Naive thymus-derived CD4-positive, alpha-beta T cell (primary cell): ENCODE measurements at regions of chr6 and their contacts with region 1.

Region 1: DNA sequence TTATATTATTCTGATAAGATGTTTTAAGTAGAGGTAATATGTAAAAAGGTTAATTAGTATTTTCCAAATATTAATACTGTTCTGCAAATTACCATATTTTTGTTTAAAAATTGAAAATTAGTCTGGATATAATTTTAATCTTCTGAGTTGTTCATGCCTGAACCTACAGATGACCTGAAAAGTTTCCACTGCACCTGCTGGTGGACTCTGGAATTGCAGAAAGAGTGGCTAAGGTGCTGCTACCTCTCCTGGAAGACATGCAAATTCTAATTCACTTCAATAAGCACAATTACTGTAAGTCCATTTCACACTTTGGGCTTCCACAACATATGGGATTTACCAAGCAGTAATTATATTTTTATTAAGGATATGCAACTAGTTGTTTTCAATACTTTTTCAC is 77.7 kb upstream of the OLIG3 start:
- DNase-seq: peak; percentile 16 to 59 (median 38)
- ATAC-seq: peak; percentile 70
- H3K4me3 ChIP-seq: no peak overlapping the region
- H3K4me3 Mint-ChIP-seq: no peak overlapping the region
- H3K27ac ChIP-seq: no peak overlapping the region
- H3K27ac Mint-ChIP-seq: no peak overlapping the region
- H3K4me1 ChIP-seq: no peaks in the 10 kb centered on the region
- H3K4me1 Mint-ChIP-seq: peaks cover 0 to 10% (median 5%) of the 10 kb centered on the region in 7 donors
- H3K27me3 ChIP-seq: no peaks in the 10 kb centered on the region
- H3K27me3 Mint-ChIP-seq: peaks cover 0 to 65% (median 12%) of the 10 kb centered on the region in 5 donors

Region 2: DNA sequence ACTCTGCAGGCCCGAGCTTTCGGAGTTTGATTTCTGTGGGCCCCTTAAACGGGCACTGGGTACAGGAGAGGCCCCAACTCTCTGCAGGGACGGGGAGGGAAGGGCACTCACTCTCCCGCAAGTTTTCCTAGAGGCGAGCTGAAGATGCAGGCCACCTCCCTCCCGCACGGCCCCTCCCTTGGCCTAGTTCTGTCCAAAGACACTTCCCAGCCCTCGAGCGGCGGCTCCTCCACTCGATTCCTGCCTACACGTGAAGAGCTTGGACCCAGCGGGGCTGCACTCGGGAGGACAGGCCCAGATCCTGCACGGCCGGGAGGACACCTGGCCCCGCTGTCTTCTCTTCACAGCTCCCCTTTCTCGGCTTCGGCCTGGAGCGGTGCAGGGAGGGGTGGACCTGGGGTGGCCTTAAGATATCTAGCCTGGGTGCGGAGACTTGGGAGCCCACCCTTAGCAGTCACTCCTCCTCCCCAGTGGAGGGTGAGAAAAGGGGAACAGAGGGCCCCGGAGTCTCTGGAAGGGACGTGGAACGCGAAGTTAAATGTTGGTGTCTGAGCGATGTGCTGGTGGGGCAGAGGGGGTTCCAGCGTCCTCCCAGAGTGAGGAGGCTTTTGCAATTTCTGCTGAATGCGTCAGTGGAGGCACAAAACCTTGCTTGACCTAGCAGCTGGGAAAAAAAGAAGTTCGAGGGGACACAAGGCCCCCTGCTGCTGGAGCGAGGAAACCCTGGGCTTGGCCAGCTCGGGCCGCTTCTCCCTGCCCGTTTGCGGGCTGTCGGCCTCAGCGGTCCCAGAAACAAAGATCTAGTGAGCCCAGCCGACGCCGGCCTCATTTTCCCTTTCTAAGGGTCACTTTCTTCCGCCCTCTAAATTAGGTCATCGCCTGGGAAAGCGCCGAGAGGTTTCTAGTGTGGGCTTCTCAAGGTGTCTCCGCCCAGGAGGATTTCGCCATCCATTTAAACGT is 82.5 kb before region 1 on chr6:
- CTCF ChIA-PET with region 1: no interaction called
- POLR2A ChIA-PET with region 1: no interaction called
- intact Hi-C with region 1: loop called in 1 of 2 experiments (anchors 2 kb)
- DNase-seq: no peak
- ATAC-seq: no peak
- H3K4me3 ChIP-seq: peak overlapping the region; percentile 46
- H3K4me3 Mint-ChIP-seq: peak overlapping the region; percentile 37 to 82 (median 64)
- H3K27ac ChIP-seq: no peak overlapping the region
- H3K27ac Mint-ChIP-seq: peak overlapping the region in 1 of 9 donors; percentile 9
- H3K4me1 ChIP-seq: peaks cover 21 to 39% of the 10 kb centered on the region in 2 donors
- H3K4me1 Mint-ChIP-seq: peaks cover 5 to 57% (median 33%) of the 10 kb centered on the region in 7 donors
- H3K27me3 ChIP-seq: peaks cover 57 to 60% of the 10 kb centered on the region in 2 donors
- H3K27me3 Mint-ChIP-seq: peaks cover 82 to 92% (median 88%) of the 10 kb centered on the region in 5 donors

Region 3: DNA sequence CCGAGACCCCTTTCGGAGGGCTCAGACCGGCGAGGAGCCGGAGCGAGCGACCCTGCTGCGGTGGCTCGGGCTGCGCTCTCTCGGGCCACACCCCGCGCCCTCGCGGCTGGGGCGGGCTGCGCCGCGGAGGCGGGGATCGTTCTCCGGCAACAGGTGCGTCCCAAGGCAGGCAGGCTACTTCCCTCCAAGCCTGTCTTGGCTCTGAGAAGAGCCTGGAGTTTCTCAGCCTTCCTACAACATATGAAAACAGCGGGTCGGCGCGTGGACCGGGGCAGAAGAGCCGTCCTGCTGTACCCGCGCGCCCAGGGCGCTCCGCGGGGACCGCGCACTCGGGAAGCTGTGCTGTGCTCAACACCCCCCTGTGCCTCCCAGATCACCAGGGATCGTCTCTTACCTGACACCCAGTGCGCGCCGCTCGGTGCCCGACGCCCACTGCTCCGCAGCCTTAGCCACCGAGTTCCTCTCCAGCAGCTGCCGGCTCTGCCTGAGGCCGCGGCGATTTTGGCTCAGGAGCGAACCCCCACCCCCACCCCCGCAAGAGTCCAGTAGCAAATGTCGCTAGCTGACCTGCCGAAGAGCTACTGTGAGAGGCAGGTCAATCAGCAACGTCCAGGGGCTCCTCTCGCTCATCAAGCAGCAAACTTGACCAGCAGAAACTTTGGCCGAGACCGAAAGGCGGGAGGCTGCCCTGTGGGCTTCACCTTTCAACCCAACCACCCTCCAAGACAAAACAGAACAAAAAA is 74.0 kb before region 1 on chr6:
- CTCF ChIA-PET with region 1: interaction called, 3 read pairs
- POLR2A ChIA-PET with region 1: interaction called, 3 read pairs
- intact Hi-C with region 1: loop called in 1 of 2 experiments (anchors 2 kb)
- DNase-seq: peak in 4 of 9 donors; percentile 17 to 32 (median 28)
- ATAC-seq: peak; percentile 52
- H3K4me3 ChIP-seq: peak overlapping the region; percentile 34
- H3K4me3 Mint-ChIP-seq: peak overlapping the region; percentile 28 to 81 (median 56)
- H3K27ac ChIP-seq: no peak overlapping the region
- H3K27ac Mint-ChIP-seq: peak overlapping the region in 1 of 9 donors; percentile 13
- H3K4me1 ChIP-seq: peaks cover 35 to 36% of the 10 kb centered on the region in 2 donors
- H3K4me1 Mint-ChIP-seq: peaks cover 22 to 52% (median 39%) of the 10 kb centered on the region in 7 donors
- H3K27me3 ChIP-seq: peaks cover 47 to 55% of the 10 kb centered on the region in 2 donors
- H3K27me3 Mint-ChIP-seq: peaks cover 45 to 91% (median 76%) of the 10 kb centered on the region in 5 donors

Region 4: GRCh38 chr6:137522198-137522798 is 49.6 kb before region 1 on chr6:
- CTCF ChIA-PET with region 1: no interaction called
- POLR2A ChIA-PET with region 1: no interaction called
- intact Hi-C with region 1: loop called in 1 of 2 experiments (anchors 5 kb)
- DNase-seq: no peak
- ATAC-seq: no peak
- H3K4me3 ChIP-seq: no peak overlapping the region
- H3K4me3 Mint-ChIP-seq: no peak overlapping the region
- H3K27ac ChIP-seq: no peak overlapping the region
- H3K27ac Mint-ChIP-seq: no peak overlapping the region
- H3K4me1 ChIP-seq: no peaks in the 10 kb centered on the region
- H3K4me1 Mint-ChIP-seq: peaks cover 0 to 8% (median 2%) of the 10 kb centered on the region in 7 donors
- H3K27me3 ChIP-seq: peaks cover 4 to 7% of the 10 kb centered on the region in 2 donors
- H3K27me3 Mint-ChIP-seq: peaks cover 16 to 52% (median 33%) of the 10 kb centered on the region in 5 donors

Region 5: DNA sequence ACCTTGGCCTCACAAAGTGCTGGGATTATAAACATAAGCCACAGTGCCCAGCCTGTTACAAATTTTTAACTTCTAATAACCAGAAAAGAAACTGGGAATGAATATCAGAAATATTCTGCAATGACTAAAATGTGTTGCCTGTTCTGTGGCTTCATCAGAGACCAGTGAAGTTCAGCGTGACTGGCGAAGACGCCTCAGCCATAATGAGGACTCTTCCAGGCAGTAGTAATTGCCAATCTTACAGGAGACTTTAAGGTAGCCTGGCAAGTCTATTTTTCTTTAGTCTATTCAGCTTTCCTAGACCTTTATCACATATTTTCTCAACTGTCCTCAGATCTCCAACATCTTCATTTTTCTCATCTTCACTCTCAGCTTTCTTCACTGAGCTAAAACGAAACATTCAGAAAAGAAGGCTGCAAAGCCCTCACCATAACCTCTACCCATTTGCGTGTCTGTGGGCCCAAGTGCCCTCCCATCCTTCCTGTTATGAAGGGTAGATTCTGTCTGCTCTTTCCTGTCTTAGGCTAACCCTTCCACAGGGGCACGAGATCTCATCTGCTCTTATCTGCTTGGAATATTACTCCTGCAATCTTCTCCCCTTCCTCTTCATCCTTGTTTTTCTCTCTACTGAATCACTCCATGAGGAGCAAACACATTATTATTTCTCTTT is 35.6 kb before region 1 on chr6:
- CTCF ChIA-PET with region 1: interaction called, 6 read pairs
- POLR2A ChIA-PET with region 1: interaction called, 5 read pairs
- intact Hi-C with region 1: loop called in 1 of 2 experiments (anchors 5 kb)
- DNase-seq: peak in 6 of 9 donors; percentile 11 to 68 (median 44)
- ATAC-seq: peak; percentile 91
- H3K4me3 ChIP-seq: no peak overlapping the region
- H3K4me3 Mint-ChIP-seq: no peak overlapping the region
- H3K27ac ChIP-seq: no peak overlapping the region
- H3K27ac Mint-ChIP-seq: no peak overlapping the region
- H3K4me1 ChIP-seq: peaks cover 18 to 24% of the 10 kb centered on the region in 2 donors
- H3K4me1 Mint-ChIP-seq: peaks cover 0 to 7% (median 0%) of the 10 kb centered on the region in 7 donors
- H3K27me3 ChIP-seq: no peaks in the 10 kb centered on the region
- H3K27me3 Mint-ChIP-seq: peaks cover 0 to 16% (median 5%) of the 10 kb centered on the region in 5 donors

Region 6: DNA sequence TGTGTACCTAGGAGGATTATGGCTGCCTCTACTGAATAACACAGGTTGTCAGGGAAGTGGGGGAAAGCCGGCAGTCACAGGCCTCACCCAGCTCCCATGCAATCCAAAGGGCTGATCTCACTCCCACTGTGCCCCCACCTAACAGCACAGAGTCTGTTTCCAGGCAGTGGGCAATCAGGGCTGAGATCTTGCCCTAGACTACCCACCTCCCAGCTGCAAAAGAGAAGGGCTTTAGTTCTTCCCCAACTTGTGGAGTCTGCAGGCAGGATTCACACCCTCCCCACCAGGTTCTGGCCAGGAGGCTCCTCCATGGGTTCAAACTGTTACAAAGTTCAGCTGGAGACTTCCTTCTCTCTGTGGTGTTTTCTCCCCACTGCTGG is 11.7 kb before region 1 on chr6:
- CTCF ChIA-PET with region 1: interaction called, 5 read pairs
- POLR2A ChIA-PET with region 1: interaction called, 7 read pairs
- intact Hi-C with region 1: loop called in 1 of 2 experiments (anchors 1 kb)
- DNase-seq: no peak
- ATAC-seq: no peak
- H3K4me3 ChIP-seq: peak overlapping the region; percentile 25
- H3K4me3 Mint-ChIP-seq: peak overlapping the region; percentile 57 to 82 (median 78)
- H3K27ac ChIP-seq: no peak overlapping the region
- H3K27ac Mint-ChIP-seq: peak overlapping the region; percentile 39 to 93 (median 80)
- H3K4me1 ChIP-seq: peaks cover 26 to 29% of the 10 kb centered on the region in 2 donors
- H3K4me1 Mint-ChIP-seq: peaks cover 24 to 55% (median 40%) of the 10 kb centered on the region in 7 donors
- H3K27me3 ChIP-seq: no peaks in the 10 kb centered on the region
- H3K27me3 Mint-ChIP-seq: peaks cover 0 to 24% (median 0%) of the 10 kb centered on the region in 5 donors